ENCODE measurements at regions of chr3 and their contacts with region 1.

Region 1: GRCh38 chr3:170811928-170812591 is 57.9 kb downstream of the RPL22L1 start:
- DNase-seq: peak; percentile 78 to 84
- H3K4me3 ChIP-seq: no peak overlapping the region
- H3K27ac ChIP-seq: no peak overlapping the region
- H3K4me1 ChIP-seq: peaks cover 55% of the 10 kb centered on the region
- H3K27me3 ChIP-seq: no peaks in the 10 kb centered on the region
- CTCF ChIP-seq: peak; percentile 100

Region 2: GRCh38 chr3:170307671-170308403 is 504.2 kb before region 1 on chr3:
- CTCF ChIA-PET with region 1: no interaction called
- POLR2A ChIA-PET with region 1: interaction called, 35 read pairs
- intact Hi-C with region 1: loop called (anchors 1 kb)
- DNase-seq: peak; percentile 59 to 99
- H3K4me3 ChIP-seq: no peak overlapping the region
- H3K27ac ChIP-seq: peak overlapping the region; percentile 42
- H3K4me1 ChIP-seq: peaks cover 19% of the 10 kb centered on the region
- H3K27me3 ChIP-seq: no peaks in the 10 kb centered on the region
- CTCF ChIP-seq: no peak

Region 3: GRCh38 chr3:170414202-170414663 is 397.8 kb before region 1 on chr3:
- CTCF ChIA-PET with region 1: interaction called, 97 read pairs
- POLR2A ChIA-PET with region 1: interaction called, 5 read pairs
- intact Hi-C with region 1: loop called (anchors 1 kb)
- DNase-seq: peak; percentile 62 to 68
- H3K4me3 ChIP-seq: no peak overlapping the region
- H3K27ac ChIP-seq: no peak overlapping the region
- H3K4me1 ChIP-seq: no peaks in the 10 kb centered on the region
- H3K27me3 ChIP-seq: no peaks in the 10 kb centered on the region
- CTCF ChIP-seq: peak; percentile 99

Region 4: DNA sequence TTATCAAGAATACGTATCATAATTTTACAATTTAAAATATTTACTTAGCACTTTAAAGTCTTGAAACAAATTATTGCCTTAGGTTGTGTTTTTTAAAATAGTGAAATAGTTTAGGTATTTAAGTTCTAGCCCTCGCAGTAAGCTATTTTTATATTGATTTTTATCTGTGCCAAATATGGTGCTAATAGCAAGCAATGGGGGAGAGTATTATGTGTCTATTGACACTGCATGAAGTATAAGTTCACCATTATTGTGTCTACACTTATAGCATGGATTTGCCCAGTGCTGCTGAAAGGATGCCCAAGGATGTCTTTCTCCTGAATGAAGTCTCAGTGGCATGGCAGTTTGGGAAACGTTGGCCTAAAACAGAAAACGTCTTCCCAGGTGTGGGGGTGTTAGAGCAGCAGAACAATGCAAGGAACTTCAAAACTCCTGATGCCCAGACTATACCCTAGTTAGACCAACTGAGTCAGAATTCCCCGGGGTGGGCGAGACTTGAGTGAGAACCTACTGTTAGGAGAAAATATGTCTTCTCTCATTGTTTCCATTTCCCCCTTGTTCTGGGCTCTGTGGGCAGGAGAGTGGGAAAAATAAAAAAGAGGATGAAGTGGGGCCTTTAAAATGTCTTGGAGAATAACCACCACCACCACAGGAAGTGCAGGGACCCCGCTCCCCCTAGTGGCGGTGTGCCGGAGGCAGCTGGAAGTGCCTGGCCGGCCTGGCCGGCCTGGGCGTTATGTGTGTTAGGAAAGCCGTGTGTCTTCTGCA is 122.0 kb before region 1 on chr3:
- CTCF ChIA-PET with region 1: interaction called, 9 read pairs
- POLR2A ChIA-PET with region 1: no interaction called
- intact Hi-C with region 1: loop called (anchors 1 kb)
- DNase-seq: no peak
- H3K4me3 ChIP-seq: no peak overlapping the region
- H3K27ac ChIP-seq: no peak overlapping the region; the same call in 1 of the 2 replicates
- H3K4me1 ChIP-seq: peaks cover 33% of the 10 kb centered on the region
- H3K27me3 ChIP-seq: no peaks in the 10 kb centered on the region
- CTCF ChIP-seq: peak; percentile 66

Region 5: DNA sequence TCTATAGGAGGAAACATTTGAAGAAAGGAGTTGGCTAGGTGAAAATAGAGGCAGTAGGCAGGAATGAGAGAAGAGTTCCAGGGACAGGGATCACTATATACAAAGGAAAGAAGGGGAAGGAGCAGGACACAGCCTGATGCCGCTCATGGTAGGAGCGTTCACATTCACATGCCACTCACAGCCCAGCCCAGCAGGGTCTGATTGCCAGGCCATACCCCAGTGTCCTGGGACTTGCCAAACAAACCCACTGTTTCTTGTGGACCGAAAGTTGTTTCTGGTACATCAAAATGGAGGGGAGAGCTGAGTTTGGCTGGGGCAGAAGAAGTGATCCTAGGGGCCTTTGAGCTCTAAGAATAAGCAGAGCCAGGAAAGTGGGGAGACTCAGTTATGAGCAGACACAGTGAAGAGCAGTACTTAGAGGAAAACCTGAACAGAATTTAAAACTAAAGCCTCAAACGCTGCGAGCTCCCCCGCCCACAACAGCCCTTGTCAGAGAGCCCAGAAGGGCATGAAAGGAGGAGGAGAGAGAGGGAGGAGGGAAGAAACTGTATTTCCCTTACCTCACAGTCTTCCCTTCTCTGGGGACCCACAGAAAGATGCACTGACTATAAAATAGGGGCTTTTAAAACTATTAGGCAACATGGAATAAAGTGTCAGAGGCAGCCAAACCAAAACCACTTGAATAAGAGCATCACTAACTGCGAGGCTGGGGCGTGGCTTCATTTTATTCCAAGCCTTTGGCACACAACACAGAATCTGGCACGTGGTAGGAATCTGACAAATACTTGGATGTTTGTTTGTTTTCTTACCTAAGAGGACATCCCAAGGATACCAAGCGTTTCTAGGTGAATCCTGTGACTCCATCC is 71.1 kb before region 1 on chr3:
- CTCF ChIA-PET with region 1: interaction called, 3 read pairs
- POLR2A ChIA-PET with region 1: no interaction called
- intact Hi-C with region 1: loop called (anchors 1 kb)
- DNase-seq: peak; percentile 59 to 88
- H3K4me3 ChIP-seq: peak overlapping the region; percentile 6; the same call in 1 of the 2 replicates
- H3K27ac ChIP-seq: peak overlapping the region; percentile 81
- H3K4me1 ChIP-seq: peaks cover 72% of the 10 kb centered on the region
- H3K27me3 ChIP-seq: no peaks in the 10 kb centered on the region
- CTCF ChIP-seq: no peak

Region 6: DNA sequence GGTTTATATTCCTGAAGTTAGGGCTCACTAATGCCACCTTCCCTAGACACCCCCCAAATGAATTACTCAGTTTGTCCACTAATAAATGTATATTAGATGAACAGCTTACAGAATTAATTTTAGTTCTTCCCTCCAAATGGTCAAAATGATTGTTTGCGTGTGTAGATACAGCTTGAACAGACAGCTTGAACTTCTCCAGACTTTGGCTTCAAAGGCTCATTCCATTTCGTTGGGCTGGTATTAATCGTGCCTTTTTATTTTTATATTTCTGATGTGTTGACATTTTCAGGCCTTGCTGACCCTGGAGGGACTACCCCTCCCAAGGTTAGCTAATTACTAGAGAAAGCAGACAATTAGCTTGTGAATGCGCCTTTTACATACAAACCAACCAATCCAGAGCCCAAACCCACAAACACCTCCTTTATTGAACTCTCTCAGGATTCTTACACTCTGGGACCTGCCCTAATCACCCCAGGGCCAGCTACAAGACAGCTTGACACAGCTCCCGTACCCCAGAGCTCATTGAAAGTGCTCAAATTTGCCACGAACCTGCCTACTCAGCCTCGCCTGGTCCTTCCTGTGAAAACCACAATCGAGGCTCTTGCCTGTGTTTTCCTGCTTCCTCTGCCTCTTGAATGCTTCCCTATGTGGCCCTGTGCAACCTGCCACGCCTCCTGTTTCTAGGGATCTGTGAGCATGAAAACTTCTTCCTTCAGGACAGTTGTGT is 17.6 kb after region 1 on chr3:
- CTCF ChIA-PET with region 1: no interaction called
- POLR2A ChIA-PET with region 1: no interaction called
- intact Hi-C with region 1: no loop called
- DNase-seq: no peak
- H3K4me3 ChIP-seq: no peak overlapping the region
- H3K27ac ChIP-seq: no peak overlapping the region
- H3K4me1 ChIP-seq: no peaks in the 10 kb centered on the region
- H3K27me3 ChIP-seq: no peaks in the 10 kb centered on the region
- CTCF ChIP-seq: no peak

Region 7: GRCh38 chr3:170858599-170858998 is 46.5 kb after region 1 on chr3:
- CTCF ChIA-PET with region 1: no interaction called
- POLR2A ChIA-PET with region 1: no interaction called
- intact Hi-C with region 1: no loop called
- DNase-seq: no peak
- H3K4me3 ChIP-seq: no peak overlapping the region
- H3K27ac ChIP-seq: no peak overlapping the region
- H3K4me1 ChIP-seq: no peaks in the 10 kb centered on the region
- H3K27me3 ChIP-seq: no peaks in the 10 kb centered on the region
- CTCF ChIP-seq: no peak